ENCODE measurements at regions of chr7 and their contacts with region 1.

Region 1: DNA sequence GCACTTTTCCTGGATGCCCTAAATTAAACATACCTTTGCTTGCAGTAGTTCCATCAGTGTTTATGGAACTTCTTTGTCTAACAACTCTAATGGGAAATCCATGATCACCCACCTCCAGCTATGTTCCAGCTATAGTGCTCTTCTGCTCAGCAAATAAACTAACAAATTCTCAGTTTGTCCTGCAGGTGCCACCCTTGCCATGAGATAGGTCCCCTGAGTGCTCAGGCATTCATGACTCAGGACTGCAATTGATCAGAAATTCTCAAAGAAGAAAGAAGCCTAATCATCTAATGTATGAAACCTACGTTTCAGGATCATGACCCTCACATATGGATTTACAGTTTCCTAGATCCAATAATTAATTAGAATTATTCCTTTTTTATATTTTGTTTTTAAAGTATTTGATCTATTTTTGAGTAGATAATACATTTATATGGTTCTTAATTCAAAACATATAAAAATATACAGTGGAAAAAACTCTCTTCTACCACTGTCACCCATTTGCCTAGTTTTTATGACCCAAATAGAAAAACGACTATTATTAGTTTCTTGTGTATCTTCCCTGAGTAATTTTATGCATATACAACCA is 48.7 kb upstream of the DYNC1I1 start:
- DNase-seq: peak; percentile 25 to 52
- H3K4me3 ChIP-seq: no peak overlapping the region
- H3K27ac ChIP-seq: no peak overlapping the region
- H3K4me1 ChIP-seq: peaks cover 0 to 2% (median 0%) of the 10 kb centered on the region in 4 experiments; a peak in 1 of 7 replicates
- H3K27me3 ChIP-seq: no peaks in the 10 kb centered on the region; a peak in 1 of 7 replicates
- CTCF ChIP-seq: peak; percentile 23 to 80 (median 61)
- EP300 ChIP-seq: no peak
- POLR2A ChIP-seq: no peak
- RAD21 ChIP-seq: peak; percentile 92 to 94

Region 2: GRCh38 chr7:95608359-95609173 is 115.1 kb before region 1 on chr7:
- CTCF ChIA-PET with region 1: no interaction called
- POLR2A ChIA-PET with region 1: no interaction called
- DNase-seq: no peak
- H3K4me3 ChIP-seq: no peak overlapping the region; a peak in 1 of 8 replicates
- H3K27ac ChIP-seq: no peak overlapping the region
- H3K4me1 ChIP-seq: no peaks in the 10 kb centered on the region
- H3K27me3 ChIP-seq: no peaks in the 10 kb centered on the region; a peak in 2 of 7 replicates
- CTCF ChIP-seq: no peak
- EP300 ChIP-seq: no peak
- POLR2A ChIP-seq: no peak
- RAD21 ChIP-seq: no peak

Region 3: DNA sequence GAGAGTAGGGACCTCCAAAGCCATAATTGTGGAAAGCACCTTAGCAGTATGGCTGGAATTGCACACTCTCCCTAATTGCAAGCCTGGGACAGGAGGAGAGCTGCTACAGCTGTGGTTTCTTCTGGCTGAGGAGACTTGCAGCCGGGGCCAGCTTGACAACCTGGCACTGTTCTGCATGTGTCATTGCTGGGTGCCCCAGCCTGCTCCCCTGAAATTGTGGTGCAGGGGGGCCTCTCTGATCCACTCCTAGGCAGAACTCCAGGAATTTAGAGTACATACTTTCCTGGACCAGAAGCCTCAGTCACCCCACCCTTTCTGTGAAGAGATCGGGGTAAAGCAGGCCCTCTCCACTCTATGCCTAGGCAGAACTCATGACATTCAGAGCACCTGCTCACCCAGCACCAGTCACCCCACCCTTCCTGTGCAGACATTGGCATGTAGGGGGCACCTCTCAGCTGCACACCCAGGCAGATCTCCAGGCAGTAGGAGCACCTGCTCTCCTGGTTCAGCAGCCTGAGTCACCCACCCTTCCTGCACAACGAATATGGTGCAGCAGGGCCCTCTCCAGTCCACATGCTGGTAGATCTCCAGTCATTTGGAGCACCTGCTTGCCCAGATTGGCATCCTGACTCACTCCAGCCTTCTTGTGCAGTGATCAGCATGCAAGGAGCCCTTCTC is 14.3 kb after region 1 on chr7:
- CTCF ChIA-PET with region 1: interaction called, 14 read pairs
- POLR2A ChIA-PET with region 1: interaction called, 3 read pairs
- DNase-seq: no peak
- H3K4me3 ChIP-seq: no peak overlapping the region
- H3K27ac ChIP-seq: no peak overlapping the region
- H3K4me1 ChIP-seq: no peaks in the 10 kb centered on the region
- H3K27me3 ChIP-seq: no peaks in the 10 kb centered on the region
- CTCF ChIP-seq: no peak
- EP300 ChIP-seq: no peak
- POLR2A ChIP-seq: no peak
- RAD21 ChIP-seq: no peak

Region 4: GRCh38 chr7:95899919-95900513 is 176.3 kb after region 1 on chr7:
- CTCF ChIA-PET with region 1: interaction called, 10 read pairs
- POLR2A ChIA-PET with region 1: no interaction called
- DNase-seq: no peak
- H3K4me3 ChIP-seq: no peak overlapping the region
- H3K27ac ChIP-seq: no peak overlapping the region
- H3K4me1 ChIP-seq: no peaks in the 10 kb centered on the region
- H3K27me3 ChIP-seq: no peaks in the 10 kb centered on the region
- CTCF ChIP-seq: peak; percentile 31 to 60 (median 43)
- EP300 ChIP-seq: no peak
- POLR2A ChIP-seq: no peak
- RAD21 ChIP-seq: peak in 1 of 2 experiments; percentile 36; a peak in 2 of 4 replicates

Region 5: GRCh38 chr7:95972523-95972922 is 248.8 kb after region 1 on chr7:
- CTCF ChIA-PET with region 1: no interaction called
- POLR2A ChIA-PET with region 1: no interaction called
- DNase-seq: no peak
- H3K4me3 ChIP-seq: no peak overlapping the region
- H3K27ac ChIP-seq: no peak overlapping the region
- H3K4me1 ChIP-seq: 0 out of 7 replicates have a peak, but pooled peaks cover 0 to 2% (median 0%) of the 10 kb centered on the region in 4 experiments
- H3K27me3 ChIP-seq: no peaks in the 10 kb centered on the region
- CTCF ChIP-seq: no peak
- EP300 ChIP-seq: no peak
- POLR2A ChIP-seq: no peak
- RAD21 ChIP-seq: no peak

Measured in H1 (cell line).